Cardiac septum (tissue), 1 donor: ENCODE measurements at regions of chr2 and their contacts with region 1.

Region 1: GRCh38 chr2:176814306-176815052 is 398.1 kb upstream of the HNRNPA3 start:
- DNase-seq: no peak

Region 2: DNA sequence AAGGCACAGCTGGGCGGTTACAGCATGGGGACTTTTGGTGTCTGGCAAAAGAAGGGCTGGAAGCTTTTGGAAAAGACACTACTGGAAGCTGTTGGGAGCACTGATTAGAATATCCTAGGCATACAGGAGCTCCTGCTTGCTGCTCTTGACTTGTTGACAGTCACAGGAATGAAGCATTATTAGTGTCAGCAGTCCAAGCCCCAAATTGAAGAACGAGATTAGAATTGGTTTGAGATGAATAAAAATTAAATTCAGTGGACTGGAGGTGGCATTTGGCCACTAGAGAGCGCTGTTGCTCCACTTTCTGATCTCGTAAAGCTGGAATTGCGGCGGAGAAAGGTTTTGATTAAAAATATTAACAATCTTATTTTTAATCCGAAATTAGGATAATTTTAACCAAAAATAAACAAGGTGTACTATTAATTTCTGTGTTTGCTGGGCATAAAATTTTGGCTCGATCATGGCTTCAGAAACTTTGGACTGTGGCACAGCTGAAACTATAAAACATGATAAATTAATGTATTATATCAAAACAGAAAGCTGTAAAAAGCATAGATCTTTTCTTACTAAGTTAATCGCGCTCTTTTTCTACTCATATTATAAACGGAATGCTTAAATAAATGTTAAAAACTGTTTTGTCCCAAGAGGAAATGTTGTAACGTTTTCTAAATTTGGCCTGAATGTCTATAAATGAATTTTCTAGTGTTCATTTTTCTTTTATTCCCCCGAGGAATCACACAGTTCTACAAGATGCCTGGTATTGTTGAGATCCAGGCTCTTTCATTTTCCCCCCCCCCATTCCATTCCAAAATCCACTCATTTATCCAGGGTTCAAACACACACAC is 687.3 kb before region 1 on chr2:
- intact Hi-C with region 1: loop called (anchors 5 kb)
- DNase-seq: no peak

Region 3: GRCh38 chr2:176653479-176654443 is 160.7 kb before region 1 on chr2:
- intact Hi-C with region 1: loop called (anchors 5 kb)
- DNase-seq: no peak

Region 4: GRCh38 chr2:177148477-177149154 is 334.1 kb after region 1 on chr2:
- intact Hi-C with region 1: loop called (anchors 10 kb)
- DNase-seq: peak; percentile 84